MCF 10A (cell line): ENCODE measurements at regions of chr12 and their contacts with region 1.

Region 1: GRCh38 chr12:26097046-26097878 is 27.6 kb downstream of the BHLHE41 start:
- DNase-seq: peak; percentile 86
- H3K4me3 Mint-ChIP-seq: no peak overlapping the region
- H3K27ac Mint-ChIP-seq: no peak overlapping the region
- H3K4me1 Mint-ChIP-seq: peaks cover 7% of the 10 kb centered on the region
- H3K27me3 Mint-ChIP-seq: no peaks in the 10 kb centered on the region
- CTCF ChIP-seq: peak; percentile 93

Region 2: GRCh38 chr12:26113853-26114719 is 16.8 kb after region 1 on chr12:
- CTCF ChIA-PET with region 1: interaction called, 14 read pairs
- POLR2A ChIA-PET with region 1: interaction called, 6 read pairs
- intact Hi-C with region 1: loop called (anchors 2 kb)
- DNase-seq: peak; percentile 84
- H3K4me3 Mint-ChIP-seq: peak overlapping the region; percentile 72
- H3K27ac Mint-ChIP-seq: peak overlapping the region; percentile 89
- H3K4me1 Mint-ChIP-seq: peaks cover 22% of the 10 kb centered on the region
- H3K27me3 Mint-ChIP-seq: no peaks in the 10 kb centered on the region
- CTCF ChIP-seq: no peak

Region 3: DNA sequence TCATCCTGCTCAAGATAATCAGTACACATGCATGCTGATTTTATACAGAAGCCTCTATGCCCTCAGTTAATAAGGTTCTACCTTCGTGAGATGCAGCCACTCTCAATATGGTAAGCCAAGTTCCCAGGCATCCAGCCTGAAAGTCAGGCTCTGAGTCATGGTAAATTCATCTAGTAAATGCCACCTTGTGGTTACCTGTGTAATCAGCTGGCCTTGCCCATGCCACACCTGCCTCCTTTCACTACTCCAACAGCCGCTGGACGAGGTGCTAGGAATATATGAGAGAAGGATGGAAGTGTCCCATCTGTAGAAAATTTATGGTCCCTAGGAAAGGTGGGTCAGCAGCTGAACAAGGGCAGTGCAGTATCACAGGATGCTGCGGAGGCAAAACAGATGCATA is 305.4 kb after region 1 on chr12:
- CTCF ChIA-PET with region 1: interaction called, 5 read pairs
- POLR2A ChIA-PET with region 1: no interaction called
- intact Hi-C with region 1: loop called (anchors 1 kb)
- DNase-seq: peak; percentile 78
- H3K4me3 Mint-ChIP-seq: no peak overlapping the region
- H3K27ac Mint-ChIP-seq: no peak overlapping the region
- H3K4me1 Mint-ChIP-seq: no peaks in the 10 kb centered on the region
- H3K27me3 Mint-ChIP-seq: no peaks in the 10 kb centered on the region
- CTCF ChIP-seq: peak; percentile 42

Region 4: DNA sequence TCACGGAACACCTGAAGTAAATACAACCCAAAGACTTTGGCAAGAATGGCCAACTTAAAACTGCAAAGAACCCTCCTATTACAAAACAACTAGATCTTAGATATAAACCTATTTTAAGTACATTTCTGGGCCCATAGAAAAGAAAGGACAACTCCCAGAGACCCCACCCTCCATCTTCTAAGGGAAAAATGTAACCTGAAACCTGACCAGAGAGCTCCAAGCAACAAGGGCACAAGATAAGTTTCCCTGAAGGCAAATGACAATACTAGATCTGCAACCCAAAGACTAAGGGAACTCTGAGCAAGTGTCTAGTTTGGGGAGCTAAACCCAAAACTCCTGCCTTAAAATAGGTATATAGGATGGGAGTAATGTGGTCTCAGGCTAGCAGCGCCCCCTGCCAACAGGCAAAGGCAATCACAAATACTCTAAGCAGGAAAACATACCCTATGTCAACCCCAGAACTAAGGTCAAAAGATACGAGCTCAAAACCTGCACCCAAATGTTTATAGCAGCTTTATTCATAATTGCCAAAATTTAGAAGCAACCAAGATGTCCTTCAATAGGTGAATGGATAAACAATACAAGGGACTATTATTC is 516.9 kb after region 1 on chr12:
- CTCF ChIA-PET with region 1: no interaction called
- POLR2A ChIA-PET with region 1: no interaction called
- intact Hi-C with region 1: loop called (anchors 1 kb)
- DNase-seq: peak; percentile 51
- H3K4me3 Mint-ChIP-seq: no peak overlapping the region
- H3K27ac Mint-ChIP-seq: no peak overlapping the region
- H3K4me1 Mint-ChIP-seq: no peaks in the 10 kb centered on the region
- H3K27me3 Mint-ChIP-seq: no peaks in the 10 kb centered on the region
- CTCF ChIP-seq: peak; percentile 73

Region 5: GRCh38 chr12:26701604-26702215 is 604.4 kb after region 1 on chr12:
- CTCF ChIA-PET with region 1: interaction called, 5 read pairs
- POLR2A ChIA-PET with region 1: interaction called, 3 read pairs
- intact Hi-C with region 1: loop called (anchors 1 kb)
- DNase-seq: peak; percentile 65
- H3K4me3 Mint-ChIP-seq: no peak overlapping the region
- H3K27ac Mint-ChIP-seq: no peak overlapping the region
- H3K4me1 Mint-ChIP-seq: peaks cover 13% of the 10 kb centered on the region
- H3K27me3 Mint-ChIP-seq: no peaks in the 10 kb centered on the region
- CTCF ChIP-seq: peak; percentile 66

Region 6: GRCh38 chr12:26878661-26879119 is 781.4 kb after region 1 on chr12:
- CTCF ChIA-PET with region 1: no interaction called
- POLR2A ChIA-PET with region 1: no interaction called
- intact Hi-C with region 1: loop called (anchors 10 kb)
- DNase-seq: peak; percentile 62
- H3K4me3 Mint-ChIP-seq: no peak overlapping the region
- H3K27ac Mint-ChIP-seq: peak overlapping the region; percentile 54
- H3K4me1 Mint-ChIP-seq: peaks cover 9% of the 10 kb centered on the region
- H3K27me3 Mint-ChIP-seq: no peaks in the 10 kb centered on the region
- CTCF ChIP-seq: no peak